Activated T-helper 1 cell treated with anti-CD3 and anti-CD28 coated beads, Interleukin-12 subunit alpha, Interleukin-12 subunit beta, Interleukin-2, Interleukin-4 antibody, amounts not matched to agents 30 ng/mL and 10 ng/mL and 1 ng/mL, durations not matched to agents 14 hours and 24 hours and 36 hours (primary cell): ENCODE measurements at regions of chr21 and their contacts with region 1.

Region 1: DNA sequence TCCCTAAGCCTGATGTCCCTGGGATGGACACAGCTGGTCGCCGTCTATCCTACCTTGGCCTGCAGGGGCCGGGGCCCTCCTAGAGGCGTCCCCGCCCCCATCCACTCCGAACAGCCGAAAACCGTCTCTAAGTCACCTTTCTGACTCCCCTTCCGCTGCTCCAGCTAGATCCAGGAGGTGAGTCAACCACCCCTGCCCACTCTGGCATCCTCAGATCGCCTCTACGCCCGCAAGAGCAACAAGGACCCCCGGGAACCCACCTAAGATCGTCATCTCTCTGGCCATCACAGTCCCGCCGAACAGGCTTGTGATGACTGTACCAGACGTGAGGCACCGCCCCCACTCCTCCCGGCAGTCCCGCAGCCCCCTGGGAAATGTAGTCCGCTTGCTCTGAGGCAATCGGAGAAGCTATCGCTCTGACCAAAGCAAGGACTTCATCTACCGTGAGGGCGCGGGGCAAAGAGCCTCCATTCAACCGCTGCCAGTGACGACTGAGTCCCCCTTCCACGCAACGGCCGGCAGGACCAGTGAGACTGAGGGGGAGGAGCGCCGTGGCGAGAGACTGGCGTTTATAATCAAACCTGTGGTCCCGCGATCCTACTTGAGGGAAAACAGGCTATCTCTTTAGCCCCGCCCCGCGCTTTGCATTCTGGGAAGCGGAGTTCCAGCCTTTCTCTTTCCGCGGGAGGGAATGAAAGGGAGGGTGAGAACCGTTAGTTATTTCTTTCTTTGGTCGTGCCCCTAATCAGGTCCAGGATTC is at the start of gene HSPA13:
- DNase-seq: peak; percentile 99
- H3K4me3 Mint-ChIP-seq: peak within 1 kb of the TSS; percentile 100
- H3K27ac Mint-ChIP-seq: peak within 1 kb of the TSS; percentile 100
- H3K4me1 Mint-ChIP-seq: peaks cover 52% of the 10 kb centered on the region
- H3K27me3 Mint-ChIP-seq: peaks cover 2% of the 10 kb centered on the region
- total RNA-seq, gene HSPA13: 43.6 and 50.4 TPM in 2 replicates

Region 2: GRCh38 chr21:14086553-14086952 is 296.5 kb before region 1 on chr21:
- intact Hi-C with region 1: loop called (anchors 1 kb)
- DNase-seq: no peak
- H3K4me3 Mint-ChIP-seq: no peak overlapping the region
- H3K27ac Mint-ChIP-seq: peak overlapping the region; percentile 90
- H3K4me1 Mint-ChIP-seq: peaks cover 33% of the 10 kb centered on the region
- H3K27me3 Mint-ChIP-seq: no peaks in the 10 kb centered on the region

Region 3: GRCh38 chr21:14251336-14251735 is 131.7 kb before region 1 on chr21:
- intact Hi-C with region 1: loop called (anchors 1 kb)
- DNase-seq: no peak
- H3K4me3 Mint-ChIP-seq: no peak overlapping the region
- H3K27ac Mint-ChIP-seq: no peak overlapping the region
- H3K4me1 Mint-ChIP-seq: peaks cover 10% of the 10 kb centered on the region
- H3K27me3 Mint-ChIP-seq: peaks cover 6% of the 10 kb centered on the region

Region 4: GRCh38 chr21:14270620-14271019 is 112.4 kb before region 1 on chr21:
- intact Hi-C with region 1: no loop called
- DNase-seq: no peak
- H3K4me3 Mint-ChIP-seq: no peak overlapping the region
- H3K27ac Mint-ChIP-seq: no peak overlapping the region
- H3K4me1 Mint-ChIP-seq: no peaks in the 10 kb centered on the region
- H3K27me3 Mint-ChIP-seq: peaks cover 14% of the 10 kb centered on the region

Region 5: GRCh38 chr21:14482165-14482564 is 99.2 kb after region 1 on chr21:
- intact Hi-C with region 1: loop called (anchors 10 kb)
- DNase-seq: peak; percentile 9
- H3K4me3 Mint-ChIP-seq: peak overlapping the region; percentile 44
- H3K27ac Mint-ChIP-seq: peak overlapping the region; percentile 93
- H3K4me1 Mint-ChIP-seq: peaks cover 74% of the 10 kb centered on the region
- H3K27me3 Mint-ChIP-seq: no peaks in the 10 kb centered on the region

Region 6: GRCh38 chr21:15437883-15438282 is 1054.9 kb after region 1 on chr21:
- intact Hi-C with region 1: loop called (anchors 2 kb)
- DNase-seq: no peak
- H3K4me3 Mint-ChIP-seq: no peak overlapping the region
- H3K27ac Mint-ChIP-seq: peak overlapping the region; percentile 34
- H3K4me1 Mint-ChIP-seq: peaks cover 12% of the 10 kb centered on the region
- H3K27me3 Mint-ChIP-seq: no peaks in the 10 kb centered on the region

Region 7: GRCh38 chr21:15729674-15730483 is 1346.9 kb after region 1 on chr21 and contains the start of gene USP25:
- intact Hi-C with region 1: loop called (anchors 1 kb)
- DNase-seq: peak; percentile 80
- H3K4me3 Mint-ChIP-seq: peak within 1 kb of the TSS; percentile 93
- H3K27ac Mint-ChIP-seq: peak within 1 kb of the TSS; percentile 91
- H3K4me1 Mint-ChIP-seq: peaks cover 40% of the 10 kb centered on the region
- H3K27me3 Mint-ChIP-seq: peaks cover 31% of the 10 kb centered on the region
- total RNA-seq, gene USP25: 25.6 and 26.8 TPM in 2 replicates